ENCODE measurements at regions of chr1 and their contacts with region 1.

Region 1: GRCh38 chr1:223531742-223532341 is 133.7 kb downstream of the CAPN8 start:
- DNase-seq: peak; percentile 33
- H3K4me3 ChIP-seq: no peak overlapping the region
- H3K27ac ChIP-seq: no peak overlapping the region
- H3K4me1 ChIP-seq: no peaks in the 10 kb centered on the region
- CTCF ChIP-seq: peak; percentile 80

Region 2: GRCh38 chr1:223558512-223558911 is 26.7 kb after region 1 on chr1:
- CTCF ChIA-PET with region 1: no interaction called
- POLR2A ChIA-PET with region 1: no interaction called
- intact Hi-C with region 1: no loop called
- DNase-seq: no peak
- H3K4me3 ChIP-seq: no peak overlapping the region
- H3K27ac ChIP-seq: no peak overlapping the region
- H3K4me1 ChIP-seq: no peaks in the 10 kb centered on the region
- CTCF ChIP-seq: no peak

Region 3: DNA sequence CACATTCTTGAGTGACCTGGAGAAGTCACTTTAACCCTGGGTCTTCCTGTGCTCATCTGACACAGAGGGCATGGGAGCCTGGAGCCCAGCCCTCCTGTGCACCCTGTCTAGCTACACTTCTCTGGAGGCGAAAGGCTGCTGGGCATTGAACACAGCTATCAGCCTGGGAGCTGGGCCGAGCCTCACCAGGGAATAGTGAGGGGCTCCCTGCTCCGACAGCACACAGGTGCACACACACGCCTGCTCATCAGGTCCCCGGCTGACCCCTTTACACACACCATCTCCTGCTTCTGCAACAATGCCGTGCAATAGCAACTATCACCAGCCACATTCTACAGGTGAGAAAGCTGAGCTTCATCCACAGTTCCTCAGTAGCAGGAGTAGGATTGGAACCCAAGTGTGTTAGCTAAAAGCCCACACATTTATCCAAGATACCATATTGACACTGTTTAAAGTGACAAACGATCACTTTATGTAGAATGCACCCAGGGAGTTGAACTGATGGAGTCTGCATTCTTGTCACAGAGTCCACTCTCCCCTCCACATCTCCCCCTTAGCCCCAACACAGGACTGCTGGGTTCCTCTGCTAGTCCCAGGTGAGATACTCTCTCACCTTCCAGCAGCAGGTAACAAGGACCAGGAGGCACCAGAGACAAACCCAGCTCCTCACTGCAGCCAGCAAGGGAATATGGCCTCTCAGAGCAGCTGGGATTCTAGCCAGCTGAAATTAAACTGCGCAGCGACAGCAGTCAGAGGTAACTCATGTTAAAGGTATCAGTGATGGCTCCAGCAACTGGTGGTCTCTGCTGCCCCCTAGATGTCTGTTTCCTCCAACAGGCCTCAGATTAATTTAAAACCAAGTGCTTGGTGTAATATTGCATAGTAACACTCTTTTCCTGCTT is 152.0 kb after region 1 on chr1:
- CTCF ChIA-PET with region 1: no interaction called
- POLR2A ChIA-PET with region 1: no interaction called
- intact Hi-C with region 1: loop called (anchors 1 kb)
- DNase-seq: peak; percentile 37
- H3K4me3 ChIP-seq: no peak overlapping the region
- H3K27ac ChIP-seq: no peak overlapping the region
- H3K4me1 ChIP-seq: no peaks in the 10 kb centered on the region
- CTCF ChIP-seq: peak; percentile 80

Measured in OCI-LY7 (cell line).